ENCODE measurements at regions of chr2 and their contacts with region 1.

Region 1: DNA sequence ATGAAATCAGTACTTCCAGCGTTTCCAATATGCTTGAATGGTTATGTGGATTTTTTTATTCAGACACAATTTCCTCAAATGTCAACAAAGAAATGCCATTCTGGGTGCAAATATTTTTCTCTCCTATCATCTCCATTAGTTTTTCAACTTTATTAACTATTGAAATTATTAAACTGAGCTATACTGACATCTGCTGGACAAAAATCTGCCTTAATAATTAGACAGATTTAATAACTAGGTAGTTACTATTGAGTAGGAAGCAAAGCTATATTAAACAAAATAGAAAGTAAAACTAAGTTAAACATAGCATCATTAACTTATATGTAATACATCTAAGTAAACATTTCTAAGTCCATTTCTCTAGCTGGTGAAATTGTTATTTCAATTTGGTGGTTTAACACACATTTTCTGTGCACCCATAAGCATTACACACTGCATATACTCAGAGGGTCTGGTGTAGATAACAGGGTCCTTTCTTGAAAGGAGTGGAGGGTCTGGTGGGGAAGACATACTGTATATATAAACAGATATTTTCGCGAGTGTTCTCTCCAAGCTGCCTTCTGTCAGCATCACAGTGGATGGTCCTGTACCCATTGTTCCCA is 77.0 kb downstream of the LANCL1 start:
- ATAC-seq: no peak
- H3K4me3 ChIP-seq: no peak overlapping the region
- H3K27ac ChIP-seq: no peak overlapping the region
- H3K4me1 ChIP-seq: no peaks in the 10 kb centered on the region

Region 2: DNA sequence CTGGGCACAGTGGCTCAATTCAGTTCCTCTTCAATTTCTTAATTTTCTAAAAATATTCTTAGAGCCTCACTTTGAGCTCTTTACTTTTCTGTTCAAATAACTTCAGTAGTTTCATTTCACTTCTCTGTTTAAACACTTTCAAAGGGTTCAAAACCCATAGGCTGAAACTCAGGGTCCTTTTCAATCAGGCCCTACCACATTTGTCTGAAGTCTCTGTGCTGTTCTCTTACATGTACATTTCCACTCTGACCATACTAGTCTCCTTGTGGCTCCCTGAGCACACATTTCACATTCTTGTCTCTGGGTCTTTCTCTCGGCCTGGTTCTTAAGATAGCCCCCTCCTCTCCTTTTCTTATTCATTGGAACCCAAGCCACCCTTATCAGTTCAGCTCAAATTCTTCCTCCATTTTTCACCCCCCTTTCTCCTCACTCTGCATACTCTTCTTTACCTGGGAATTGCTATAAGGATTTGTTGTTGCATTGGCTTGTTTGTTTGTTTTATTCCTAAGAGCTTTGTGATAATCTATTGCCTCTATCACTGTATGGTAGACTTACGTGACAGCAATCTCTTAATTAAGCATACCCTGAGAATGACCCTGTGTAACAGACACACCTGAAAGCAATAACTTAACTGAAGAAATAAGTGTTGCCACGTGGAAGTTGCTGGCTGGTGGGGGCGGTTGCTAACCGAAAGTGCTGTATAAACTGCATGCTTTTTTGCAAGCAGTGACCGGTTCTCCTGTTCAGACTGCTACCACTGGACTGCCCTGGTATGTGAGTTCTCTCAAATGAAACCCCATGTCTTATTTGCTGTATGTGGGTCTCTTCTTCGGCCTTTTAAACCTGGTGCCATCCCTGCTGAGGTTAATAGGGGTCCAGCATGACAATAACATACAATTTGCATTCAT is 146.6 kb before region 1 on chr2:
- in situ Hi-C with region 1: loop called in 2 of 9 experiments (anchors 10 to 25 kb)
- ATAC-seq: no peak
- H3K4me3 ChIP-seq: no peak overlapping the region
- H3K27ac ChIP-seq: no peak overlapping the region
- H3K4me1 ChIP-seq: no peaks in the 10 kb centered on the region

Measured in motor neuron (in vitro differentiated cells).